ENCODE measurements at regions of chr5 and their contacts with region 1.

Region 1: DNA sequence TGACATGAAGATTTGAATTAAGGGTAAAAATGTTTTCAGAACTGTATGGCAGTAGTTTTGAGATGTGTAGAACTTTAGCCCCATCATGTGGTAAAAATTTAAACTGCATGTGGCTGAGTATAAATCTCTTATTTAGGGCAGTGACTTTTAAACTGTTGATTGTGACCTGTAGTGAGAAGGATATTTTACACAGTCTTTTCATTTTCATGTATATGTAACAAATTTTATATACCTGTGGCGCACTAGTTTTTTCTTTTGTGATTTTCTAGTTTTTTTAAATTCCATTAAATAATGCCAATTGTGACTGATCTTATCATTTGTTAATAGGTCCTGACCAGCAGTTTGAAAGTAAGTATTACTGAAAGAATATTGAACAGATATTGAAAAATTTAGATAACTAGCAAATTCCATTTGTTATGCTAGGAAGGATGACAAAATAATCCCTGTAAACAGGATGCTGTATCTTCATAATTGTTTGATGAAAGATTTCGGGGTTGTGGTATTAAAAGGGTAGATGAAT is 47.2 kb downstream of the GPBP1 start:
- DNase-seq: no peak
- H3K4me3 ChIP-seq: no peak overlapping the region
- H3K27ac ChIP-seq: no peak overlapping the region
- H3K4me1 ChIP-seq: peaks cover 18% of the 10 kb centered on the region
- H3K27me3 ChIP-seq: no peaks in the 10 kb centered on the region
- CTCF ChIP-seq: peak; percentile 97

Region 2: DNA sequence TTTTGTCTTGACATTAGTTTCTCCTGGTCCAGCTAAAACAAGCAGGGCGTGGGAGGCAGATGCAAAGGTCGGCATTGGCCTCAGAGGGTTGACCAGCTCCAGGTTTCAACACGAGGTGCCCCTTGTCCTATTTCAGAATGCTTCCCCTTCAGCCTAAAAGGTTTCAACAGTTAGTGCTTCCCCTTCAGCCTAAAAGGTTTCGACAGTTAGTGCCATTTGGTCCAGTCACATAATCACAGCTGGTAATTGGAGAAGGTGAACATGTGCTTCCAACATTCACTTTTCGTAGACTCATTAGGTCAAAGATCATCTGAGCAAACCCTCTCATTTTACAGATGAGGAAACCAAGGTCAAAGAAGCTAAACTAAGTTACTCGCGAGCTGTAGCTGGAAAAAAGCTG is 676.1 kb before region 1 on chr5:
- intact Hi-C with region 1: loop called (anchors 5 kb)
- DNase-seq: no peak
- H3K4me3 ChIP-seq: no peak overlapping the region
- H3K27ac ChIP-seq: no peak overlapping the region
- H3K4me1 ChIP-seq: peaks cover 18% of the 10 kb centered on the region
- H3K27me3 ChIP-seq: no peaks in the 10 kb centered on the region
- CTCF ChIP-seq: no peak

Region 3: DNA sequence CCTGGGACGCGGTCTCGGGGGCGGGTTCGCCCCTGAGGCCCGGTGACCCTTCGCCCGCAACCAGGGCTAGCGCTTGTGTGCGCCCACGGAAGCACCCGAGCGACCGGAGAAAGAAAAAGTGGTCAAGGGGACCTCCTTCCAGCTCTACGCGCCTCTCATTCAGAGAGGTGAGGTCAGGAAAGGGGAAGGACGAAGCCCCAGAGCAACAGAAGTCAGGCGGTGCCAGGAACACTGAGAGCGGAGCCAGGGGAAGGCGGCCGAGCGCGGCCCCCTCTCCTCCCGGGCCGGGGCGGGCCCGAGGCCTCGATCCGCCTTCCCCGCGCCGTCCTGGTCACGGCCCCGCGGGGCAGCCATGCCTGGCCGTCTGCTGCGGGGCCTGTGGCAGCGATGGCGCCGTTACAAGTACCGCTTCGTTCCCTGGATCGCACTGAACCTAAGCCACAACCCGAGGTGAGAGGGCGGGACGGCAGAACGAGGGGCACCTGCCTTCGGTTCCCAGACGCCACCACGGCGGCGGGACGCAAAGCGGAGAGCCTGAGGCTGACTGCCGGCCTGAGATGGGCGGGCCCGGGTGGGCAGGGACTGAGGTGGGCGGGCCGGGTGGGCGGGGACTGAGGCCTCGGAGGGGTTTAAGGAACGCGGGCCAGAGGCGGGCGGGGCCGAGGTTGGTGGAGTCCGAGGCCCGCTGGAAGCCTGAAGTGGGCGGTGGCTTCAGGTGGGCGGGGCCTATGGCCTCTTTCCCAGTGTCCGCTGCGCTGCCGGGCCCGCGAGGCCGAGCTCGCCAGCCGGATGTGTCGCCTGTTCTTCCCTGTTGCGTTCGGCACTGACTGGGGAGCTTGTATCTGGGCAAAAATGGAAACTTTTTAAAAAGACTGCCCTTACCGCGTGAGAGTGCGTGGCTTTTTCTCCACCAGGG is 311.6 kb before region 1 on chr5 and contains the start of gene SETD9:
- intact Hi-C with region 1: loop called (anchors 10 kb)
- DNase-seq: peak; percentile 99
- H3K4me3 ChIP-seq: peak within 1 kb of the TSS; percentile 77
- H3K27ac ChIP-seq: peak within 1 kb of the TSS; percentile 95
- H3K4me1 ChIP-seq: peaks cover 21% of the 10 kb centered on the region
- H3K27me3 ChIP-seq: no peaks in the 10 kb centered on the region
- CTCF ChIP-seq: no peak
- total RNA-seq, gene SETD9: 16.3 TPM

Region 4: DNA sequence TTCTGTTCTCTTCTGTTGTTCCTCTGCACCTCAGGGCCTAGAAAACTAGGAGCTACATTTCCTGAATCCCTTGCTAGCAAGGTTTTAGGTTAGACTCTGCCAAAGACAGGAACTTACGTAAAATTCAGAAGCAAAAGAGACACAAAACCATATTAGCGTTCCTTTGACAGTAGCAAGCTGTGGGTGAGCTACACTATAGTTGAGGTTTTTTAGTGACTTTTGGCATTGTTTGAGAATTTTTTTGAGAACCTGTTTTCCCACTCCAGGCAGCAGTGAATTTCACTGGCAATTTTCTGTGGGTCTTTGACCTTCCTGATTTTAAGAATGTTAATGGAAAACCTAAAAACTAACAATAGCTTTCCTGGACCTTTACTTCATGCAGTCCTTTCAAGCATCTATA is 1203.1 kb after region 1 on chr5:
- intact Hi-C with region 1: no loop called
- DNase-seq: no peak
- H3K4me3 ChIP-seq: no peak overlapping the region
- H3K27ac ChIP-seq: no peak overlapping the region
- H3K4me1 ChIP-seq: no peaks in the 10 kb centered on the region
- H3K27me3 ChIP-seq: no peaks in the 10 kb centered on the region
- CTCF ChIP-seq: no peak

Measured in left ventricle myocardium inferior (tissue), 1 donor.